Spleen (tissue), 13 donors: ENCODE measurements at regions of chr4 and their contacts with region 1.

Region 1: DNA sequence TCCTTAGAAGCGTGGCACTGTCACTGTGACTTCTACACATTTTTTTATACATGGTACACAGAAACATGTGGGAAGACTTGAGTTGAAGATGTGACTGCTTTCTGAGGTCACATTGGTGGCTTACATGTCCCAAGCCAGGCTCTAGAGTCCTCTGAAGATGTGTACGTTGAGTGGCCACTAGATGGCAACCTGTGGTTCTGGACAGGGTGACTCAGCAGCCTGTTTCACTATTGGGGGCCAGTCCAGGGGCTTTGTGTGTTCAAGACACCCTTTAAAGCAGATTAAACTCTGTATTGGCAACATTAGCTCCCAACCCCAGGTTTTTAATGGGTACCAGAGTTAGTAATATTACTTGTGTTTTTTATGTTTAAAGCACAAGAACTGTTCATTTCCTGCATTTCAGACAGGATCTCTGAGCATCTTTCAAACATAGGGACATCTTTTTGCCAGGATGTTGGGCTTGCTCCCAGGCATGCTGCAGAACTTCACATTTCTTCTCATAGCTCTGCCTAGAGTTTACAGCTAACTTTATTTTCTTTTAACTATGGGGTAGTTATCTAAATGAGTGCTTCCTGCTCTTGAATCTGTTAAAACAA is 53.0 kb downstream of the DCUN1D4 start:
- DNase-seq: no peak
- H3K4me3 ChIP-seq: no peak overlapping the region
- H3K27ac ChIP-seq: peak overlapping the region in 3 of 8 donors; percentile 7 to 51 (median 20)
- H3K4me1 ChIP-seq: peaks cover 0 to 13% (median 6%) of the 10 kb centered on the region in 6 donors
- H3K27me3 ChIP-seq: no peaks in the 10 kb centered on the region
- CTCF ChIP-seq: peak; percentile 16 to 78 (median 61)
- POLR2A ChIP-seq: no peak

Region 2: DNA sequence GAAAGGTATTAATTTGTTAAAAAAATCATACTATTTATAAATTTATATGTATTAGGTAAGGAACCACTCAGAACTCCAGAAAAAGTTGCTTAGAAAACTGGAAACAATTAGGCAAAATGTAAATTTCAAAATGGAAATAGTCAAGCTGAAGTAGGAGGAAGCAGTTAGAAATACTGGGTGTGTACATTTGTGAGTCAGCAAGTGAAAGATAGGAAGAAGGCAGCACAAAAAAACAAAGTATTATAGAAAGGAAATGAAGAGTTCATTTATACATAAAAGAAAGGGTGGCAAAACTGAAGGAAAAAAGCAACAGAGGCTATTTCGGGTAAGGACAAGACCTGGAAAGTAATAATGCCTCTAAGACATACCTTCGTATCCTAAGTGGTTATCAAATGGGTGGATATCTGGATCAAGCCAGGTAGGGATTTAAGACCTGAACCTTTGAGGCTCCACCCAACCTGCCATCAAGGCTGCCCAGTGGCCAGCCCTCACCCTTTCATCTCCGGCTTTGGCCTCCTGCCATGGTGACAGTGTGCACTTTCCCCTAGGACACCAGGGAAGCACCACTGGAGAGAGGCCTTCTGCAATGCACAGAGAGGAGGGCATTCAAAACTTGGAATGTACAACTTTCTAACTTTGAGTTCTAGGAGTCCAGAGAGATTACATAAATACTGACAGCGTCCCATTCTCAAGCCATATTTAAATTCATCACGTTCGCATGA is 124.2 kb after region 1 on chr4 and contains the start of gene LRRC66:
- intact Hi-C with region 1: loop called (anchors 5 kb)
- DNase-seq: no peak
- H3K4me3 ChIP-seq: no peak within 1 kb of the TSS
- H3K27ac ChIP-seq: no peak within 1 kb of the TSS
- H3K4me1 ChIP-seq: no peaks in the 10 kb centered on the region
- H3K27me3 ChIP-seq: no peaks in the 10 kb centered on the region
- CTCF ChIP-seq: no peak
- POLR2A ChIP-seq: no peak
- total RNA-seq, gene LRRC66: 0.14 to 0.56 (median 0.42) TPM in 6 of 7 donors, not detected in the other